ENCODE measurements at regions of chr5 and their contacts with region 1.

Region 1: GRCh38 chr5:63822614-63823013 is 139.6 kb downstream of the HTR1A start:
- DNase-seq: no peak
- ATAC-seq: no peak
- H3K4me3 ChIP-seq: no peak overlapping the region
- H3K27ac ChIP-seq: no peak overlapping the region
- H3K4me1 ChIP-seq: peaks cover 0 to 9% (median 0%) of the 10 kb centered on the region in 9 donors
- H3K27me3 ChIP-seq: no peaks in the 10 kb centered on the region
- CTCF ChIP-seq: no peak

Region 2: GRCh38 chr5:63401436-63402046 is 421.1 kb before region 1 on chr5:
- intact Hi-C with region 1: loop called in 1 of 10 experiments (anchors 10 kb)
- DNase-seq: peak; percentile 24 to 54
- ATAC-seq: peak in 3 of 8 donors; percentile 38 to 66 (median 59)
- H3K4me3 ChIP-seq: no peak overlapping the region
- H3K27ac ChIP-seq: no peak overlapping the region
- H3K4me1 ChIP-seq: no peaks in the 10 kb centered on the region
- H3K27me3 ChIP-seq: peaks cover 0 to 16% (median 0%) of the 10 kb centered on the region in 7 donors
- CTCF ChIP-seq: peak; percentile 40 to 84 (median 74)

Region 3: GRCh38 chr5:63760965-63761364 is 61.6 kb before region 1 on chr5:
- intact Hi-C with region 1: no loop called
- DNase-seq: no peak
- ATAC-seq: no peak
- H3K4me3 ChIP-seq: no peak overlapping the region
- H3K27ac ChIP-seq: no peak overlapping the region
- H3K4me1 ChIP-seq: no peaks in the 10 kb centered on the region
- H3K27me3 ChIP-seq: no peaks in the 10 kb centered on the region
- CTCF ChIP-seq: no peak

Region 4: GRCh38 chr5:63774939-63775338 is 47.7 kb before region 1 on chr5:
- intact Hi-C with region 1: loop called in 1 of 10 experiments (anchors 1 kb)
- DNase-seq: no peak
- ATAC-seq: no peak
- H3K4me3 ChIP-seq: no peak overlapping the region
- H3K27ac ChIP-seq: no peak overlapping the region
- H3K4me1 ChIP-seq: no peaks in the 10 kb centered on the region
- H3K27me3 ChIP-seq: no peaks in the 10 kb centered on the region
- CTCF ChIP-seq: no peak

Measured in heart right ventricle (tissue), 16 donors.